ENCODE measurements at regions of chr5 and their contacts with region 1.

Region 1: GRCh38 chr5:34898258-34898895 is 16.9 kb downstream of the RAD1 start:
- DNase-seq: peak; percentile 64 to 80
- ATAC-seq: peak; percentile 86
- H3K4me3 ChIP-seq: no peak overlapping the region
- H3K27ac ChIP-seq: no peak overlapping the region
- H3K4me1 ChIP-seq: no peaks in the 10 kb centered on the region
- H3K27me3 ChIP-seq: no peaks in the 10 kb centered on the region

Region 2: GRCh38 chr5:34436761-34437501 is 461.4 kb before region 1 on chr5:
- intact Hi-C with region 1: no loop called
- DNase-seq: no peak
- ATAC-seq: no peak
- H3K4me3 ChIP-seq: no peak overlapping the region
- H3K27ac ChIP-seq: no peak overlapping the region
- H3K4me1 ChIP-seq: no peaks in the 10 kb centered on the region
- H3K27me3 ChIP-seq: no peaks in the 10 kb centered on the region

Region 3: GRCh38 chr5:34486160-34486848 is 412.1 kb before region 1 on chr5:
- intact Hi-C with region 1: loop called (anchors 2 kb)
- DNase-seq: peak; percentile 87 to 95
- ATAC-seq: peak; percentile 91
- H3K4me3 ChIP-seq: no peak overlapping the region
- H3K27ac ChIP-seq: peak overlapping the region; percentile 92
- H3K4me1 ChIP-seq: peaks cover 5% of the 10 kb centered on the region in 2 donors
- H3K27me3 ChIP-seq: no peaks in the 10 kb centered on the region